T-cell (primary cell): ENCODE measurements at regions of chr6 and their contacts with region 1.

Region 1: DNA sequence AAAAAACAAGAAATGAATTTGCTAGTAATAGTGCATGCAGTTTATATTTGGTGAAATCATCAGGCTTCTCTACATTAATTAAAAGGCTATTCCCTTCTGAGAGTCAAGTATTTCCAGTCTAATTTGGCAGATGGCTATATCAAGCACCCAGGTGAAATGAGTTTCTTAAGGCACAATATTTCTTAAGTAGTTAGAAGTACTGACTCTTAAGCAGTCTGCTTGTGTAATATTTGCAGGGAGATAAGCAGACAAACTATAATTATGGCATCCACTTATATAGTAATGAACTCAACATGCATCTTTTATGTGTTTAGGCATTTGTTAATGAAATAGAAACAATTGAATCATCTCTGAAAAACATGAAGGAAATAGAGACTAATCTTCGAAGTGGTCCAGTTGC is 189.2 kb downstream of the UTRN start:
- DNase-seq: no peak
- ATAC-seq: no peak
- H3K4me3 ChIP-seq: no peak overlapping the region
- H3K4me3 Mint-ChIP-seq: no peak overlapping the region
- H3K27ac ChIP-seq: no peak overlapping the region
- H3K27ac Mint-ChIP-seq: peak overlapping the region in 1 of 2 donors; percentile 44
- H3K4me1 ChIP-seq: peaks cover 0 to under 1% of the 10 kb centered on the region in 2 experiments
- H3K4me1 Mint-ChIP-seq: peaks cover under 1 to 9% (median 3%) of the 10 kb centered on the region in 3 donors
- H3K27me3 ChIP-seq: no peaks in the 10 kb centered on the region
- H3K27me3 Mint-ChIP-seq: no peaks in the 10 kb centered on the region

Region 2: GRCh38 chr6:143248359-143248758 is 1225.9 kb before region 1 on chr6:
- CTCF ChIA-PET with region 1: no interaction called
- POLR2A ChIA-PET with region 1: no interaction called
- DNase-seq: no peak
- ATAC-seq: no peak
- H3K4me3 ChIP-seq: no peak overlapping the region
- H3K4me3 Mint-ChIP-seq: no peak overlapping the region
- H3K27ac ChIP-seq: no peak overlapping the region
- H3K27ac Mint-ChIP-seq: no peak overlapping the region
- H3K4me1 ChIP-seq: no peaks in the 10 kb centered on the region
- H3K4me1 Mint-ChIP-seq: no peaks in the 10 kb centered on the region
- H3K27me3 ChIP-seq: no peaks in the 10 kb centered on the region
- H3K27me3 Mint-ChIP-seq: no peaks in the 10 kb centered on the region

Region 3: GRCh38 chr6:144493035-144493910 is 19.0 kb after region 1 on chr6:
- CTCF ChIA-PET with region 1: no interaction called
- POLR2A ChIA-PET with region 1: no interaction called
- DNase-seq: no peak
- ATAC-seq: no peak
- H3K4me3 ChIP-seq: no peak overlapping the region
- H3K4me3 Mint-ChIP-seq: no peak overlapping the region
- H3K27ac ChIP-seq: no peak overlapping the region
- H3K27ac Mint-ChIP-seq: no peak overlapping the region
- H3K4me1 ChIP-seq: no peaks in the 10 kb centered on the region
- H3K4me1 Mint-ChIP-seq: peaks cover 9 to 12% (median 11%) of the 10 kb centered on the region in 3 donors
- H3K27me3 ChIP-seq: no peaks in the 10 kb centered on the region
- H3K27me3 Mint-ChIP-seq: no peaks in the 10 kb centered on the region

Region 4: DNA sequence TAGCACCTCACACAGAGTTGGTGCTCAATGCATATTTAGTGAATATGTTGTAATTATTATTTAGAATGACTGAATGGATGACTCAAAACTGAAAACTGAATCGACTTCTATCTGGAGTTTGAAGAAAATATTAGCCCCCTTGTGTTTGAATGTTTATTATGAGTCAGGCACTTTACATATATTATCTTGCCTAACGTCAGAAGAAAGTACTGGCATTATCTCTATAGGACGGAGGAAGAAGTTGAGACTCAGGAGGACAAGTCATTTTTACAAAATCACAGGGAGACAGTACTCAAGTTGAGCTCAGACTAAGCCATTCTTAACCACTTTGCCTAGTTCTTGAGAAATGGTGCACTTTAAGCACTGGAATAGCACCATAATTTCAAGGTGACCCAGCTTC is 494.9 kb after region 1 on chr6:
- CTCF ChIA-PET with region 1: no interaction called
- POLR2A ChIA-PET with region 1: interaction called in 1 of 2 experiments, 10 read pairs
- DNase-seq: no peak
- ATAC-seq: no peak
- H3K4me3 ChIP-seq: no peak overlapping the region
- H3K4me3 Mint-ChIP-seq: no peak overlapping the region
- H3K27ac ChIP-seq: no peak overlapping the region
- H3K27ac Mint-ChIP-seq: no peak overlapping the region
- H3K4me1 ChIP-seq: no peaks in the 10 kb centered on the region
- H3K4me1 Mint-ChIP-seq: no peaks in the 10 kb centered on the region
- H3K27me3 ChIP-seq: no peaks in the 10 kb centered on the region
- H3K27me3 Mint-ChIP-seq: peaks cover 4 to 13% of the 10 kb centered on the region in 2 donors

Region 5: DNA sequence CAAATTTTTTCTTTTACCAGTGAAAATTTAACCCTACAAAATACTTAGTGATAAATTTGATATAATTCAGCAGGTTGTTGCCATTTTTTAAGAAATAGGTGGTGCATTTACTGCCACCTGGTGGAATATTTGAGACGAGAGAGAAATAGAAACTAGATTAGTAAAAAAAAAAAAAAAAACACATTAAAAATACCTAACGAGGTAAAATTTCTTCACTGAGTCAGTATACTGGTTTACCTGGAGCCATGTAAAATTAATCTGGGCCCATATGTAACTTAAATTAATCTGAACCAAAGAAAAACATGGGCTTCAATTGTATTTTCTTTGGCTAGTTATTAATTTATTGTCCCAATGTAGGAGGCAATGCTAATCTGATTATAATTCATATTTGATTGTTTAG is 740.3 kb after region 1 on chr6:
- CTCF ChIA-PET with region 1: no interaction called
- POLR2A ChIA-PET with region 1: no interaction called
- DNase-seq: peak in 1 of 35 experiments; percentile 31
- ATAC-seq: no peak
- H3K4me3 ChIP-seq: no peak overlapping the region
- H3K4me3 Mint-ChIP-seq: no peak overlapping the region
- H3K27ac ChIP-seq: no peak overlapping the region
- H3K27ac Mint-ChIP-seq: no peak overlapping the region
- H3K4me1 ChIP-seq: no peaks in the 10 kb centered on the region
- H3K4me1 Mint-ChIP-seq: peaks cover 0 to 12% (median 5%) of the 10 kb centered on the region in 3 donors
- H3K27me3 ChIP-seq: no peaks in the 10 kb centered on the region
- H3K27me3 Mint-ChIP-seq: peaks cover 4 to 6% of the 10 kb centered on the region in 2 donors